Panc1 (cell line): ENCODE measurements at regions of chr14 and their contacts with region 1.

Region 1: GRCh38 chr14:92280554-92281262 is 42.3 kb upstream of the SLC24A4 start:
- DNase-seq: no peak
- ATAC-seq: no peak
- H3K4me3 ChIP-seq: no peak overlapping the region
- H3K27ac ChIP-seq: no peak overlapping the region
- H3K4me1 ChIP-seq: no peaks in the 10 kb centered on the region
- H3K27me3 ChIP-seq: no peaks in the 10 kb centered on the region; the same call in 1 of the 2 replicates
- CTCF ChIP-seq: no peak

Region 2: GRCh38 chr14:92199763-92200162 is 80.9 kb before region 1 on chr14:
- CTCF ChIA-PET with region 1: no interaction called
- POLR2A ChIA-PET with region 1: no interaction called
- in situ Hi-C with region 1: no loop called
- intact Hi-C with region 1: no loop called
- DNase-seq: no peak
- ATAC-seq: no peak
- H3K4me3 ChIP-seq: no peak overlapping the region
- H3K27ac ChIP-seq: no peak overlapping the region
- H3K4me1 ChIP-seq: no peaks in the 10 kb centered on the region
- H3K27me3 ChIP-seq: no peaks in the 10 kb centered on the region
- CTCF ChIP-seq: no peak

Region 3: GRCh38 chr14:92254786-92255185 is 25.9 kb before region 1 on chr14:
- CTCF ChIA-PET with region 1: no interaction called
- POLR2A ChIA-PET with region 1: interaction called, 12 read pairs
- in situ Hi-C with region 1: no loop called
- intact Hi-C with region 1: no loop called
- DNase-seq: no peak
- ATAC-seq: no peak
- H3K4me3 ChIP-seq: no peak overlapping the region
- H3K27ac ChIP-seq: no peak overlapping the region
- H3K4me1 ChIP-seq: no peaks in the 10 kb centered on the region
- H3K27me3 ChIP-seq: no peaks in the 10 kb centered on the region
- CTCF ChIP-seq: no peak

Region 4: GRCh38 chr14:92768795-92769194 is 488.1 kb after region 1 on chr14:
- CTCF ChIA-PET with region 1: no interaction called
- POLR2A ChIA-PET with region 1: no interaction called
- in situ Hi-C with region 1: no loop called
- intact Hi-C with region 1: no loop called
- DNase-seq: no peak
- ATAC-seq: no peak
- H3K4me3 ChIP-seq: no peak overlapping the region
- H3K27ac ChIP-seq: no peak overlapping the region
- H3K4me1 ChIP-seq: no peaks in the 10 kb centered on the region
- H3K27me3 ChIP-seq: no peaks in the 10 kb centered on the region
- CTCF ChIP-seq: no peak